ENCODE measurements at regions of chr15 and their contacts with region 1.

Region 1: DNA sequence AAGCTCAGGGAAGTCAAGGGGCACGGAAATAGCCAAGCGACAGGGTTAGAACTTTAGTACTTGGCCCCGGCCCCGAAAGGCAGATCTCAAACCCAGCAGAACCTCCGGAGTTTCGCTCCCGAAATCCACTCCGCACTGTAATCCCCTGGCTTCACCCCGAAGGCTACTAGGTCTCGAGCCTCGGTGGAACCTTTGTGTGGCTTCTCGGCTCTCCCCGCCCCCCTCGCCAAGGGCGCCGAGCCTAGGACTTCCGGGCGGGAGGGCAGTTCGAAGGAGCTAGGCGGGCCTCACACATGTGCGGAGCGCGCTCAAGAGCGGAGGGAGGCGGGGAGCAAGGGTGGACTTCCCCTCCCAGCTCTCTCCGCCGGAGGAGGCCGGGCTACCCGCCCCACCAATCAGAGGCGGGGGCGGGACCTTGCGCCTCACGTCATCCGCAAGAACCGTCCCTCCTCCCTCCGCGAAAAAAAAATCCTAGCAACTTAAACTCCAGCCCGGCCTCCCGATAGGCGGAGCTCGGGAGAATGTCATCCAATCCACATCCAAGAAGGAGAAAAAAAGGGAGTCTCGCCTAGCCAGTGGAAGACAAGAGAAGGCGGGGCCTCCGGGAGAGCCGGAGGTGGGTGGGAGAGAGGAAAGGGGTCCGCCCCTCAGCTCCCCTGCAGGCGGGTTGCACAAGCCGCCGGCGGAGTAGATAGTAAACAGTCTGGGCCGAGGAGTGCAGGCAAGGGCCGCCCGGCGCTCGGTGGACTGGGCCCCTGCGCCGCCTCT is 2.4 kb upstream of the SIN3A start:
- DNase-seq: peak; percentile 100
- H3K4me3 ChIP-seq: peak overlapping the region; percentile 61 to 93 (median 84)
- H3K27ac ChIP-seq: peak overlapping the region; percentile 78
- H3K4me1 ChIP-seq: peaks cover 29% of the 10 kb centered on the region
- H3K27me3 ChIP-seq: no peaks in the 10 kb centered on the region
- CTCF ChIP-seq: no peak
- POLR2A ChIP-seq: peak; percentile 52

Region 2: DNA sequence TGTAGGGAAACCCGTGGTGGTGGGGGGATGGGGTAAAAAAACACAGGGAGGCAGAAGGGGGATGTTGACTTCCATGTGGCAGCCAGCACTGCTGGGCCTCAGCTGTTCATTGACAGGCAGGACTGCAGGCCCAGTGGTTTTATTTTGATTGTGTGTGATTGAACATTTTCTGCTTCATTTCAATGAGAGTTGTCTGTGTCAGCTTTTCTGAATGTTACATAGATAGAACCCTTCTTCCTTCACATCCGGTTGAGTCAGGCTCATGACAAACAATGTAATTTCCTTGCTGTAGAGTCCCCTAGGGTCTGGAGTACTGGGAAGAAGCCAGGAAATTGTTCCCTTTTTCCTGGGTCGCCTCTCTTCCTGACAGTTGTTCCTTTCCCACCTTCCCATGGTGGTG is 489.1 kb before region 1 on chr15:
- CTCF ChIA-PET with region 1: no interaction called
- POLR2A ChIA-PET with region 1: no interaction called
- dilution Hi-C with region 1: no loop called
- intact Hi-C with region 1: loop called (anchors 5 kb)
- DNase-seq: peak; percentile 73
- H3K4me3 ChIP-seq: no peak overlapping the region
- H3K27ac ChIP-seq: peak overlapping the region; percentile 44
- H3K4me1 ChIP-seq: peaks cover 34% of the 10 kb centered on the region
- H3K27me3 ChIP-seq: no peaks in the 10 kb centered on the region
- CTCF ChIP-seq: no peak
- POLR2A ChIP-seq: no peak

Region 3: DNA sequence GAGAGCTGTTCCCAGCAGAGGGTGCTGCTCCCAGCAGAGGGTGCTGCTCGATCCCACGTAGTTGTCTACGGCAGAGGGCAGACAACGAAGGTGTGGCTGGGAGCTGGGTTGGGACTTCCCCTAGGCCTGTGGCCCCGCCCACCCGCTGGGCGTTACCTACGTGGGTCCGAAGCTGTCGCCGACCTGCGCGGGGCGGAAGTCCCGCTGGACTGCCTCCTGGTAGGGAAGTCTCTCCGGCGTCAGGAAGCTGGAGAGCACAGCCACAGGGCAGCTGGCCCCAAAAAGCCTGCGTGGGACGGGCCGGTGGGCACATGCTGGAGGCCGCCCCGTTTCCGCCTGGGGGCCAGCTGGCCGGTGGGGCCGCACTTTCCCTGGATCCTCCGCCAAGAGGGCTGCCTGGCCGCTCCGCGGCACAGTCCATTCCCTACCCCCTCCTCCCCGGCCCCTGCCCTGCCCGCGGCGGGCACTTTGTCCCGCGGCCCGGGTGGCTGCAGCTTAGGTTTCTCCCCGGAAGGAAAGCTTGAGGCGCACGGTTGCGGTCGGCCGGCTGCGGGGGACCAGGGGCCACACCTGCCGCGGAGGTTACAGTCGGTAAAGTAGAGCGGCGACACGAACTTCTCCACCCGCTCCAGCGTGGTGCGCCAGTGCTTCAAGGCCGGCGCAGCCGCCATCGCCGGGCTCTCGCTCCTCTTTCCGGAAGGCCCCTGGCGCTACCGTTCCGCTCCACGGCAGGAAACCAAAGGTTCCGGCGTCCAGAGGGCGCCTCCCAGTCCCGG is 85.8 kb before region 1 on chr15 and contains the start of gene MAN2C1:
- CTCF ChIA-PET with region 1: interaction called, 21 read pairs
- POLR2A ChIA-PET with region 1: interaction called, 8 read pairs
- dilution Hi-C with region 1: no loop called
- intact Hi-C with region 1: loop called (anchors 1 kb)
- DNase-seq: peak; percentile 93
- H3K4me3 ChIP-seq: peak within 1 kb of the TSS; percentile 50 to 83 (median 51)
- H3K27ac ChIP-seq: peak within 1 kb of the TSS; percentile 79
- H3K4me1 ChIP-seq: peaks cover 15% of the 10 kb centered on the region
- H3K27me3 ChIP-seq: no peaks in the 10 kb centered on the region
- CTCF ChIP-seq: peak; percentile 63 to 76
- POLR2A ChIP-seq: peak; percentile 93
- total RNA-seq, gene MAN2C1: 248 TPM in 2 replicates

Region 4: GRCh38 chr15:75502360-75502759 is 48.5 kb after region 1 on chr15:
- CTCF ChIA-PET with region 1: no interaction called
- POLR2A ChIA-PET with region 1: no interaction called
- dilution Hi-C with region 1: no loop called
- intact Hi-C with region 1: no loop called
- DNase-seq: no peak
- H3K4me3 ChIP-seq: no peak overlapping the region
- H3K27ac ChIP-seq: no peak overlapping the region
- H3K4me1 ChIP-seq: no peaks in the 10 kb centered on the region
- H3K27me3 ChIP-seq: no peaks in the 10 kb centered on the region
- CTCF ChIP-seq: no peak
- POLR2A ChIP-seq: no peak

Region 5: DNA sequence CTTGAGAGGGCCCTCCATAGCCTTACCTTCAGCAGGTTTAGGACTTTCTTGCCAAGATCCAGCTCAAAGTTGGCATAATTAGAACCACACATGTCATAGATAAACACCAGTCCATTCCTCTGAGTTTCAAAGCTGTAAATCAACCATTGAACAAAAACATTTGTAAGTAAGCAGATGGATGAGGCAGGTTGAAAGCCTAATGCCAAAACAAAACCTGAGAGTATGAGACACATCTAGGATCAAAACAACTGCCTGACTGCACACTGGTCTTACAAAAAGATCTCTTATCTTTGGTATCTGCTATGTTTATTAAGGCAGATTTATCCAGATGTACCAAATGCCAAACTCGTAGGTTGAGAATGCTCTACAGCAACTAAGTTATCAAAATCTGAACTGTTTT is 63.3 kb after region 1 on chr15:
- CTCF ChIA-PET with region 1: no interaction called
- POLR2A ChIA-PET with region 1: no interaction called
- dilution Hi-C with region 1: no loop called
- intact Hi-C with region 1: no loop called
- DNase-seq: no peak
- H3K4me3 ChIP-seq: no peak overlapping the region
- H3K27ac ChIP-seq: no peak overlapping the region
- H3K4me1 ChIP-seq: no peaks in the 10 kb centered on the region
- H3K27me3 ChIP-seq: no peaks in the 10 kb centered on the region
- CTCF ChIP-seq: no peak
- POLR2A ChIP-seq: no peak

Region 6: GRCh38 chr15:75532413-75533147 is 78.7 kb after region 1 on chr15:
- CTCF ChIA-PET with region 1: no interaction called
- POLR2A ChIA-PET with region 1: no interaction called
- dilution Hi-C with region 1: no loop called
- intact Hi-C with region 1: loop called (anchors 2 kb)
- DNase-seq: peak; percentile 91
- H3K4me3 ChIP-seq: no peak overlapping the region
- H3K27ac ChIP-seq: peak overlapping the region; percentile 27
- H3K4me1 ChIP-seq: peaks cover 24% of the 10 kb centered on the region
- H3K27me3 ChIP-seq: no peaks in the 10 kb centered on the region
- CTCF ChIP-seq: peak; percentile 6 to 26
- POLR2A ChIP-seq: no peak

Measured in endothelial cell of umbilical vein (primary cell).